B cell (primary cell): ENCODE measurements at regions of chr5 and their contacts with region 1.

Region 1: GRCh38 chr5:118987988-118988865 is at the start of gene DTWD2:
- DNase-seq: peak; percentile 97
- ATAC-seq: peak; percentile 87
- H3K4me3 ChIP-seq: peak within 1 kb of the TSS; percentile 63 to 86 (median 76)
- H3K4me3 Mint-ChIP-seq: peak within 1 kb of the TSS; percentile 91
- H3K27ac ChIP-seq: peak within 1 kb of the TSS; percentile 66 to 73
- H3K27ac Mint-ChIP-seq: peak within 1 kb of the TSS; percentile 90
- H3K4me1 ChIP-seq: peaks cover 17% of the 10 kb centered on the region in 2 donors
- H3K4me1 Mint-ChIP-seq: peaks cover 32% of the 10 kb centered on the region
- H3K27me3 ChIP-seq: no peaks in the 10 kb centered on the region
- H3K27me3 Mint-ChIP-seq: no peaks in the 10 kb centered on the region
- CTCF ChIP-seq: peak; percentile 99
- total RNA-seq, gene DTWD2: 6.0 and 6.3 TPM in 2 replicates

Region 2: GRCh38 chr5:118937393-118938061 is 50.7 kb before region 1 on chr5:
- CTCF ChIA-PET with region 1: no interaction called
- POLR2A ChIA-PET with region 1: no interaction called
- intact Hi-C with region 1: no loop called
- DNase-seq: no peak
- ATAC-seq: no peak
- H3K4me3 ChIP-seq: no peak overlapping the region
- H3K4me3 Mint-ChIP-seq: no peak overlapping the region
- H3K27ac ChIP-seq: no peak overlapping the region
- H3K27ac Mint-ChIP-seq: no peak overlapping the region
- H3K4me1 ChIP-seq: no peaks in the 10 kb centered on the region
- H3K4me1 Mint-ChIP-seq: no peaks in the 10 kb centered on the region
- H3K27me3 ChIP-seq: no peaks in the 10 kb centered on the region
- H3K27me3 Mint-ChIP-seq: no peaks in the 10 kb centered on the region
- CTCF ChIP-seq: no peak

Region 3: DNA sequence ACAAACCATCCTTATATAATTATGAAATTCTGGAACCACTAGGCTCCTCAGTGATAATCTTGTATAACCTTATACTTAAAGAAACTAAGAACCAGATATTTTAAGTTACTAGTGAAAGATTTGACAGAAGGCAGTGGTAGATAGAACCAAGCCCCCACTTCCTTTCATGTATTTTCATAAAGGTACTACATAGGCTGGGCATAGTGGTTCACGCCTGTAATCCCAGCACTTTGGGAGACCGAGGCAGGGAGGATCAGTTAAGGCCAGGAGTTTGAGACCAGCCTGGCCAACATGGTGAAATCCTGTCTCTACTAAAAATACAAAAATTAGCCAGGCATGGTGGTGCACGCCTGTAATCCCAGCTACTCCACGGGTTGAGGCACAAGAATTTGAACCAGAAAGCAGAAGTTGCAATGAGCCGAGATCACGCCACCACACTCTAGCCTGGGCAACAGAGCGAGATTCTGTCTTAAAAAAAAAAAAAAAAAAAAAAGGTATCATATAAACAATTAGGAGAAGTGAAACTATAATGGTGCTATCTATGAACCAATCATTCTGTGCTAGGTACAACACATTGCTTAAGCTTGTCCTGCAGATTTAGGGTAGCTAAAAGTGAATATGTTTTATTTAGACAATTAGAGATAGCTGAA is 28.0 kb after region 1 on chr5:
- CTCF ChIA-PET with region 1: interaction called, 75 read pairs
- POLR2A ChIA-PET with region 1: no interaction called
- intact Hi-C with region 1: loop called (anchors 1 kb)
- DNase-seq: peak; percentile 80
- ATAC-seq: peak; percentile 81
- H3K4me3 ChIP-seq: peak overlapping the region in 1 of 5 experiments; percentile 4
- H3K4me3 Mint-ChIP-seq: no peak overlapping the region
- H3K27ac ChIP-seq: peak overlapping the region; percentile 79 to 82
- H3K27ac Mint-ChIP-seq: peak overlapping the region; percentile 60
- H3K4me1 ChIP-seq: peaks cover 52 to 55% of the 10 kb centered on the region in 2 donors
- H3K4me1 Mint-ChIP-seq: peaks cover 47% of the 10 kb centered on the region
- H3K27me3 ChIP-seq: no peaks in the 10 kb centered on the region
- H3K27me3 Mint-ChIP-seq: no peaks in the 10 kb centered on the region
- CTCF ChIP-seq: no peak

Region 4: DNA sequence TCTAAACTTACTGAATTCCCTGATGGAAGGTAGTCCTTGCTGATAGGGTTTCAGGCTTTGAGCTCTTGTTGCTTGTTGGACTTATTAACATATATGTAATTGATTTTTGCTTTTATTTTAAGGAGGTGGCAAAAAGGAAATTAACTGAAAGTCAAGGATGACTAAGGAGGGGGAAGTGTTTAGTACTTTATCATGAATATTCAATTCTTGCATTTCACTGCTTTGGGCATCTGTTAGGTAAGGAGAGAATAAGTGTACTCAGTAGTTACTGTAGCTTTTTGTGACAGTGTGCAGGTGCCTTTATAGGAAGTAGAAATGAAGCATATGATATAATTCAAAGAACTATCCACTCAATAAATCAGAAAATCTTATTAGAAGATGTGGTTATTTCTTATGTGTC is 129.8 kb after region 1 on chr5:
- CTCF ChIA-PET with region 1: interaction called, 14 read pairs
- POLR2A ChIA-PET with region 1: no interaction called
- intact Hi-C with region 1: no loop called
- DNase-seq: no peak
- ATAC-seq: no peak
- H3K4me3 ChIP-seq: no peak overlapping the region
- H3K4me3 Mint-ChIP-seq: no peak overlapping the region
- H3K27ac ChIP-seq: peak overlapping the region in 1 of 2 donors; percentile 59
- H3K27ac Mint-ChIP-seq: no peak overlapping the region
- H3K4me1 ChIP-seq: no peaks in the 10 kb centered on the region
- H3K4me1 Mint-ChIP-seq: peaks cover 5% of the 10 kb centered on the region
- H3K27me3 ChIP-seq: no peaks in the 10 kb centered on the region
- H3K27me3 Mint-ChIP-seq: no peaks in the 10 kb centered on the region
- CTCF ChIP-seq: no peak

Region 5: GRCh38 chr5:119255571-119256356 is 267.5 kb after region 1 on chr5:
- CTCF ChIA-PET with region 1: interaction called, 12 read pairs
- POLR2A ChIA-PET with region 1: no interaction called
- intact Hi-C with region 1: no loop called
- DNase-seq: peak; percentile 24
- ATAC-seq: no peak
- H3K4me3 ChIP-seq: no peak overlapping the region
- H3K4me3 Mint-ChIP-seq: no peak overlapping the region
- H3K27ac ChIP-seq: no peak overlapping the region
- H3K27ac Mint-ChIP-seq: peak overlapping the region; percentile 26
- H3K4me1 ChIP-seq: no peaks in the 10 kb centered on the region
- H3K4me1 Mint-ChIP-seq: peaks cover 3% of the 10 kb centered on the region
- H3K27me3 ChIP-seq: no peaks in the 10 kb centered on the region
- H3K27me3 Mint-ChIP-seq: no peaks in the 10 kb centered on the region
- CTCF ChIP-seq: peak; percentile 8

Region 6: GRCh38 chr5:119340597-119341218 is 352.5 kb after region 1 on chr5:
- CTCF ChIA-PET with region 1: interaction called, 10 read pairs
- POLR2A ChIA-PET with region 1: no interaction called
- intact Hi-C with region 1: loop called (anchors 5 kb)
- DNase-seq: peak; percentile 68
- ATAC-seq: peak; percentile 22
- H3K4me3 ChIP-seq: peak overlapping the region in 4 of 5 experiments; percentile 5 to 45 (median 22)
- H3K4me3 Mint-ChIP-seq: peak overlapping the region; percentile 85
- H3K27ac ChIP-seq: peak overlapping the region; percentile 87 to 91
- H3K27ac Mint-ChIP-seq: peak overlapping the region; percentile 95
- H3K4me1 ChIP-seq: peaks cover 95 to 96% of the 10 kb centered on the region in 2 donors
- H3K4me1 Mint-ChIP-seq: peaks cover 94% of the 10 kb centered on the region
- H3K27me3 ChIP-seq: no peaks in the 10 kb centered on the region
- H3K27me3 Mint-ChIP-seq: no peaks in the 10 kb centered on the region
- CTCF ChIP-seq: no peak

Region 7: DNA sequence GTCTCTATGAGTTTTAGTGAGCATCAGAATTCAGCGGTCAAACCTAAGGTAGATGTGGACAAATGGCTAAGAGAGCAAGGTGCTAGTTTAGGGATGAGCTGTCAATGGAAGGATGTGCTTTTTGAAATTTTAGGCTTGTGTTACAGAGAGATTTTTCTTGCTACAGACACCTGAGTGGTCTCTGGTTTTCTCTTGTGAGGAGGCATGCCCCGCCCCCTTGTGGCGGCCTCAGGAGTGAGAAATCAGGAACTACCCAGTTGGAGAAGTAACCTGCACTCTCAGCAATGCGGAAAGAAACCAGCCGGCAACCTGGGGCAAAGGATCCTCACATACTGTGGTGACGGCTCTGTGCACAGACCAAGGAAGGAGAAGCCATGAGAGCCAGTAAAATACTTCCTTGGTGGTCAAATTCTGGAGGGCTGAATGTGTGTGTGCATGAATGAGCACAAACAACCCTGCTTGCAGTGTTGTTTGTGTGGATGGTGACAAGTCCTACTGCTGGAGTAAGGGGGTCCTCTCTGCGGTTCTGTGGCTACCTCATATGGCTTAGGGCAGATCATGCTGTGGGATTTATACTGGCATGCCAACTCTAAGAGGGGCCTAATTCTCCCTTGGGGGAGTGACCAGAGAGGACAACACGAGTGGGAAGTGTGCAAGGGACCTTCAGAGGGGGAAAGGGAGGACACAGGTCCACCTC is 447.4 kb after region 1 on chr5:
- CTCF ChIA-PET with region 1: interaction called, 51 read pairs
- POLR2A ChIA-PET with region 1: no interaction called
- intact Hi-C with region 1: loop called (anchors 1 kb)
- DNase-seq: peak; percentile 89
- ATAC-seq: peak; percentile 92
- H3K4me3 ChIP-seq: peak overlapping the region in 1 of 5 experiments; percentile 5
- H3K4me3 Mint-ChIP-seq: peak overlapping the region; percentile 46
- H3K27ac ChIP-seq: no peak overlapping the region
- H3K27ac Mint-ChIP-seq: peak overlapping the region; percentile 5
- H3K4me1 ChIP-seq: peaks cover 14 to 20% of the 10 kb centered on the region in 2 donors
- H3K4me1 Mint-ChIP-seq: peaks cover 28% of the 10 kb centered on the region
- H3K27me3 ChIP-seq: no peaks in the 10 kb centered on the region
- H3K27me3 Mint-ChIP-seq: no peaks in the 10 kb centered on the region
- CTCF ChIP-seq: peak; percentile 82